Transverse colon (tissue), 4 donors: ENCODE measurements at regions of chr7 and their contacts with region 1.

Region 1: GRCh38 chr7:86963599-86964230 is 95.7 kb downstream of the ELAPOR2 start:
- DNase-seq: no peak
- H3K4me3 ChIP-seq: no peak overlapping the region
- H3K27ac ChIP-seq: no peak overlapping the region
- H3K4me1 ChIP-seq: peaks cover 0 to 20% (median 14%) of the 10 kb centered on the region in 4 donors
- H3K27me3 ChIP-seq: no peaks in the 10 kb centered on the region
- CTCF ChIP-seq: no peak
- EP300 ChIP-seq: no peak
- POLR2A ChIP-seq: no peak

Region 2: DNA sequence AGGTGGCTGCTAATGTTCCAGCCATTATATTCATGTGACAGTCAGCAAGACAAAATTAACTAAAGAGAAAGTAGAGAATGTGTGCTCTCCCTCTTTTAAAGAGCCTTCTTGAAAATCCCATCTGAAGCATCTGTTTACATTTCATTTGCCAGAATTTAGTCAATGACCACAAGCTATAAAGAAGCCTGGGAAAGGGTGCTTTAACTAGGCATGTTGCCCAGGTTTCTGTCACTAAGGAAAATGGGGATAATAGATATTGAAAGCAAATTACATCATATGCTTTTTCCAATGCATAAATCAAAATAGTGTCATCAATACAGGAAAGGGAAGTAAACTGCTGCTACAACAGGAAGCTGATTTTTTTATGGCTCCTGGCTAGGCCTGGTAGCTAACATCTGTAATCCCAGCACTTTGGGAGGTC is 28.1 kb after region 1 on chr7:
- in situ Hi-C with region 1: no loop called
- intact Hi-C with region 1: loop called (anchors 1 kb)
- DNase-seq: no peak
- H3K4me3 ChIP-seq: no peak overlapping the region
- H3K27ac ChIP-seq: no peak overlapping the region
- H3K4me1 ChIP-seq: peaks cover 0 to 10% (median 2%) of the 10 kb centered on the region in 4 donors
- H3K27me3 ChIP-seq: no peaks in the 10 kb centered on the region
- CTCF ChIP-seq: no peak
- EP300 ChIP-seq: no peak
- POLR2A ChIP-seq: no peak

Region 3: GRCh38 chr7:87003872-87004798 is 40.4 kb after region 1 on chr7:
- in situ Hi-C with region 1: no loop called
- intact Hi-C with region 1: no loop called
- DNase-seq: no peak
- H3K4me3 ChIP-seq: no peak overlapping the region
- H3K27ac ChIP-seq: no peak overlapping the region
- H3K4me1 ChIP-seq: peaks cover 0 to 5% (median 2%) of the 10 kb centered on the region in 4 donors
- H3K27me3 ChIP-seq: no peaks in the 10 kb centered on the region
- CTCF ChIP-seq: no peak
- EP300 ChIP-seq: no peak
- POLR2A ChIP-seq: no peak